ENCODE measurements at regions of chr3 and their contacts with region 1.

Region 1: GRCh38 chr3:39990532-39990931 is 181.1 kb downstream of the MYRIP start:
- DNase-seq: peak; percentile 55
- ATAC-seq: peak; percentile 75
- H3K4me3 ChIP-seq: no peak overlapping the region
- H3K27ac ChIP-seq: no peak overlapping the region
- H3K4me1 ChIP-seq: no peaks in the 10 kb centered on the region
- H3K27me3 ChIP-seq: no peaks in the 10 kb centered on the region
- CTCF ChIP-seq: peak; percentile 64 to 79 (median 75)
- POLR2A ChIP-seq: no peak
- RAD21 ChIP-seq: peak; percentile 89

Region 2: GRCh38 chr3:39414421-39414907 is 576.1 kb before region 1 on chr3:
- CTCF ChIA-PET with region 1: interaction called, 6 read pairs
- POLR2A ChIA-PET with region 1: no interaction called
- RAD21 ChIA-PET with region 1: no interaction called
- intact Hi-C with region 1: loop called (anchors 1 kb)
- DNase-seq: no peak
- ATAC-seq: peak; percentile 31
- H3K4me3 ChIP-seq: no peak overlapping the region
- H3K27ac ChIP-seq: peak overlapping the region; percentile 54
- H3K4me1 ChIP-seq: peaks cover 0 to 26% of the 10 kb centered on the region in 2 experiments; a peak in 2 of 4 replicates
- H3K27me3 ChIP-seq: no peaks in the 10 kb centered on the region
- CTCF ChIP-seq: no peak
- POLR2A ChIP-seq: no peak
- RAD21 ChIP-seq: no peak

Region 3: GRCh38 chr3:39447637-39448483 is 542.7 kb before region 1 on chr3:
- CTCF ChIA-PET with region 1: interaction called, 3 read pairs
- POLR2A ChIA-PET with region 1: no interaction called
- RAD21 ChIA-PET with region 1: no interaction called
- intact Hi-C with region 1: loop called (anchors 1 kb)
- DNase-seq: peak; percentile 81
- ATAC-seq: peak; percentile 98
- H3K4me3 ChIP-seq: no peak overlapping the region
- H3K27ac ChIP-seq: no peak overlapping the region
- H3K4me1 ChIP-seq: 0 out of 4 replicates have a peak, but pooled peaks cover 0 to 2% of the 10 kb centered on the region in 2 experiments
- H3K27me3 ChIP-seq: no peaks in the 10 kb centered on the region
- CTCF ChIP-seq: peak; percentile 80 to 91 (median 86)
- POLR2A ChIP-seq: no peak
- RAD21 ChIP-seq: peak; percentile 83

Region 4: DNA sequence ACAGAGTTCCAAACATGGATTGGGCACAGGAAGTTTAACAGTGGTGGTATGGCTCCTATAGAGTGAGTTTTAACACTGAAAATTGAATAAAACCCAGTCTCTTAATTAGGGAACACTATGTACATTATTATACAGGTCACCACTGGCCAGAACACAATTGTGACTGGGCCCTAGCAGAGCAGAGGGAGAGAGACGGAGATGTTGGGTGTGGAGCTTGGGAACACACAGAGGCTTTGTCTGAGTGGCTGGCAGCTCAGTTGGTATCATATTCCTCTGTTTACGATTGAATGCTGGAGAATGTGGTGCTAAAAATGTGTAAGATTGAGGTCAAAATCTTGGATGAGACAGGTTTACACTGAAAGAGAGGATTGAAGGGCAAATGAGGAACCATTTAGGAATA is 529.9 kb before region 1 on chr3:
- CTCF ChIA-PET with region 1: no interaction called
- POLR2A ChIA-PET with region 1: no interaction called
- RAD21 ChIA-PET with region 1: no interaction called
- intact Hi-C with region 1: no loop called
- DNase-seq: no peak
- ATAC-seq: no peak
- H3K4me3 ChIP-seq: no peak overlapping the region
- H3K27ac ChIP-seq: no peak overlapping the region
- H3K4me1 ChIP-seq: no peaks in the 10 kb centered on the region
- H3K27me3 ChIP-seq: no peaks in the 10 kb centered on the region
- CTCF ChIP-seq: no peak
- POLR2A ChIP-seq: no peak
- RAD21 ChIP-seq: no peak

Region 5: GRCh38 chr3:39541917-39542329 is 448.6 kb before region 1 on chr3:
- CTCF ChIA-PET with region 1: interaction called, 4 read pairs
- POLR2A ChIA-PET with region 1: no interaction called
- RAD21 ChIA-PET with region 1: no interaction called
- intact Hi-C with region 1: loop called (anchors 1 kb)
- DNase-seq: peak; percentile 13
- ATAC-seq: peak; percentile 66
- H3K4me3 ChIP-seq: no peak overlapping the region
- H3K27ac ChIP-seq: no peak overlapping the region
- H3K4me1 ChIP-seq: no peaks in the 10 kb centered on the region
- H3K27me3 ChIP-seq: no peaks in the 10 kb centered on the region
- CTCF ChIP-seq: peak; percentile 55 to 71 (median 62); a peak in 4 of 6 replicates
- POLR2A ChIP-seq: no peak
- RAD21 ChIP-seq: peak; percentile 78

Region 6: DNA sequence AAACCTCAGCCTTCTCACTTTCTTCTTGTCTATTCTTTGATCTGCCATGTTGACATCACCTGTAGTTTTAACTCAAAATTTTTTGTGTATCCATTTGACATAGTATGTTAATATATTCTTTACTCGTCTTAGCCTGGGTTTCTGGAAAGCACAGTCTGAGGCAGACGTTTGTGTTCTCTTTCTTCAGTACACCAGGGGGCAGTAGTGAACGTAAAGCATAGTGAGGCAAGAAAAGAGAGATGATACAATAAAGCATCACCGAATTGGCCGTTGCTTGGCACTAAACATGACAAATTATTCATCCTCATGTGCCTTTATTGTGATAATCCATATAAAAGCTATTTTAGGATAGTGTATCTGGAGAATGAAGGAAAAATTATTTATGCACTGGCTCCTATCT is 322.1 kb before region 1 on chr3:
- CTCF ChIA-PET with region 1: interaction called, 3 read pairs
- POLR2A ChIA-PET with region 1: no interaction called
- RAD21 ChIA-PET with region 1: no interaction called
- intact Hi-C with region 1: loop called (anchors 2 kb)
- DNase-seq: peak; percentile 47
- ATAC-seq: peak; percentile 93
- H3K4me3 ChIP-seq: no peak overlapping the region
- H3K27ac ChIP-seq: no peak overlapping the region
- H3K4me1 ChIP-seq: no peaks in the 10 kb centered on the region
- H3K27me3 ChIP-seq: peaks cover 19% of the 10 kb centered on the region; the same call in 1 of the 2 replicates
- CTCF ChIP-seq: peak; percentile 44 to 80 (median 76); a peak in 5 of 6 replicates
- POLR2A ChIP-seq: no peak
- RAD21 ChIP-seq: peak; percentile 55

Region 7: GRCh38 chr3:39724233-39724846 is 266.2 kb before region 1 on chr3:
- CTCF ChIA-PET with region 1: interaction called, 11 read pairs
- POLR2A ChIA-PET with region 1: no interaction called
- RAD21 ChIA-PET with region 1: no interaction called
- intact Hi-C with region 1: no loop called
- DNase-seq: no peak
- ATAC-seq: no peak
- H3K4me3 ChIP-seq: no peak overlapping the region
- H3K27ac ChIP-seq: no peak overlapping the region
- H3K4me1 ChIP-seq: no peaks in the 10 kb centered on the region
- H3K27me3 ChIP-seq: no peaks in the 10 kb centered on the region; the same call in 1 of the 2 replicates
- CTCF ChIP-seq: peak in 2 of 3 experiments; percentile 15 to 18; a peak in 1 of 6 replicates
- POLR2A ChIP-seq: no peak
- RAD21 ChIP-seq: peak; percentile 36; the same call in 1 of the 2 replicates

Region 8: DNA sequence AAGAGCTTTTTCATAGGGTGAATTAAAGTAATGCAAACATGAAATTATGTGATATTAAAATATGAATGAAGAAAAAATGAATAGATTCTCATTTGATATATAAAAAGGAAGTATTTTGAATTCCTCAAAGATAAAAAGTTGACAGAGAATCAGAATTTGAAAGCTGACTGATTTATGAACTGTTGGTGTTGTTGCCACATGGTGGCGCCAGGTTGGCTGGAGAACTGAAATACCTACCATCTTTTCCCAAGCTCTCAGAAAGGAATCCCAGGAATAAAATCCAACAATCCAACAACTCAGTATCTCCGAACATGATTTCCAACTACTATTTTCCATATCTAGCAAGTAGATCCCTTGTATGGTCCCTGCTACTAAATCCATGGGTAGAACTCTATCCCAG is 178.0 kb before region 1 on chr3:
- CTCF ChIA-PET with region 1: interaction called, 7 read pairs
- POLR2A ChIA-PET with region 1: no interaction called
- RAD21 ChIA-PET with region 1: interaction called in 1 of 2 experiments, 3 read pairs
- intact Hi-C with region 1: loop called (anchors 2 kb)
- DNase-seq: no peak
- ATAC-seq: no peak
- H3K4me3 ChIP-seq: no peak overlapping the region
- H3K27ac ChIP-seq: no peak overlapping the region
- H3K4me1 ChIP-seq: peaks cover 7 to 8% of the 10 kb centered on the region in 2 experiments; a peak in 3 of 4 replicates
- H3K27me3 ChIP-seq: peaks cover 28% of the 10 kb centered on the region; the same call in 1 of the 2 replicates
- CTCF ChIP-seq: peak; percentile 20 to 64 (median 57); a peak in 5 of 6 replicates
- POLR2A ChIP-seq: no peak
- RAD21 ChIP-seq: peak; percentile 40; the same call in 1 of the 2 replicates